Heart left ventricle (tissue), 16 donors: ENCODE measurements at regions of chr17 and their contacts with region 1.

Region 1: DNA sequence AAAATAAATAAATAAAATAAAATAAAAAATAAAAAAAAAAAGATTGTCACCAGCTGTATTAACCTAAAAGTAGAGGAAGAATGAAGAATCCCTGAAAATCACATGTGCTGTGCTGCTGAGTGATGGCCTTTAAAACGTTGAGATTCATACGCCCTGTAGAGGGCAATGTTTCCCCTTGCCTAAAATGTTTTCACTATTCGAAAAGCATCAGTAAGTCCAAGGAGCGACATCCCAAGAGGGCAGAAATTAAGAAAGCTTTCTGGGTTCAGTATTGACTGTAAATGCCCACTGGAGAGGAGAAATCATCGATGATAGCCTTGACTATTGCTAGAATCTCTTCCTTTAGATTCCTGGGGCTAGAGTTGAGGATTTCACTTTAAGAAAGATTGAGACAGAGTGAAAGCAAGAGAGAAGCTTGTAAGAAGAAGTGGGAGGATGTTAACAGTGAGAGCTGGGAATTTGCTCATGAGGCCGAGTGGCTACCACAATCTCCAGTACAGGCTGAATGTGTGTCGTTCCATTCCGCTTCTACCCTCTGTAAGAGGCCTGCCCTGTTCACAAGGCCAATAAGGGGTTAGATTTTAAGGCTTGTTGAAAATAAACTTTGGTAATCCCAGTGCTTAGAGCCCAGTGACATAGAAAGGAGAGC is 170.8 kb upstream of the FAM20A start:
- DNase-seq: no peak
- ATAC-seq: peak; percentile 53 to 89 (median 81)
- H3K4me3 ChIP-seq: peak overlapping the region in 6 of 12 donors; percentile 23 to 40 (median 37)
- H3K27ac ChIP-seq: peak overlapping the region in 11 of 12 donors; percentile 4 to 79 (median 46)
- H3K4me1 ChIP-seq: peaks cover 0 to 29% (median 4%) of the 10 kb centered on the region in 12 donors
- H3K27me3 ChIP-seq: no peaks in the 10 kb centered on the region
- CTCF ChIP-seq: peak; percentile 41 to 72 (median 63)
- POLR2A ChIP-seq: no peak

Region 2: GRCh38 chr17:68909066-68909465 is 137.1 kb after region 1 on chr17:
- intact Hi-C with region 1: loop called in 5 of 10 experiments (anchors 5 to 10 kb)
- DNase-seq: peak in 4 of 5 donors; percentile 40 to 51 (median 45)
- ATAC-seq: peak; percentile 35 to 89 (median 83)
- H3K4me3 ChIP-seq: no peak overlapping the region
- H3K27ac ChIP-seq: peak overlapping the region in 10 of 12 donors; percentile 13 to 86 (median 60)
- H3K4me1 ChIP-seq: peaks cover 0 to 32% (median 14%) of the 10 kb centered on the region in 12 donors
- H3K27me3 ChIP-seq: no peaks in the 10 kb centered on the region
- CTCF ChIP-seq: no peak
- POLR2A ChIP-seq: no peak

Region 3: GRCh38 chr17:68972119-68972704 is 200.2 kb after region 1 on chr17:
- intact Hi-C with region 1: loop called in 9 of 10 experiments (anchors 2 to 10 kb)
- DNase-seq: no peak
- ATAC-seq: peak in 1 of 4 donors; percentile 60
- H3K4me3 ChIP-seq: no peak overlapping the region
- H3K27ac ChIP-seq: peak overlapping the region in 2 of 12 donors; percentile 6 to 53
- H3K4me1 ChIP-seq: peaks cover 0 to 5% (median 0%) of the 10 kb centered on the region in 12 donors
- H3K27me3 ChIP-seq: no peaks in the 10 kb centered on the region
- CTCF ChIP-seq: peak; percentile 39 to 72 (median 56)
- POLR2A ChIP-seq: no peak

Region 4: GRCh38 chr17:69047368-69048263 is 275.6 kb after region 1 on chr17:
- intact Hi-C with region 1: loop called in 2 of 10 experiments (anchors 10 kb)
- DNase-seq: peak; percentile 48 to 72 (median 63)
- ATAC-seq: peak; percentile 78 to 95 (median 94)
- H3K4me3 ChIP-seq: no peak overlapping the region
- H3K27ac ChIP-seq: peak overlapping the region; percentile 53 to 78 (median 64)
- H3K4me1 ChIP-seq: peaks cover 0 to 32% (median 11%) of the 10 kb centered on the region in 12 donors
- H3K27me3 ChIP-seq: no peaks in the 10 kb centered on the region
- CTCF ChIP-seq: no peak
- POLR2A ChIP-seq: no peak

Region 5: DNA sequence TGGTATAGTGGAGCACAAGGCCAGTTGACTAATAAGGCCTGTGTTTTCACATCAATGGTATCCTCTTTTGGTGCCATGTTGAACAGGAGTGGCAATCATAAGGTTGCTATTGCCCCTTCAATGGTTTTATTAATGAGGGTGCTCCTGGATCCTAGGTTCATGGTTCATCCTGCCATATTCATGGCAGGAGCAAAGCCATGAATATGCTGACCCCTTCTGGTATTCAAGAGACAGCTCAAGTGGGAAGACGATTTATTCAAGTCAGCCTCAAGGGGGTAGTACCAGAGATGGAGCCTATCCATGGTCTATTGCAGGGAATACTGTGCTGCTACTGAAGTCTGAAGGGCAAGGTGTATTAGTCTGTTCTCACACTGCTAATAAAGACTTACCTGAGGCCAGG is 286.2 kb after region 1 on chr17:
- intact Hi-C with region 1: loop called in 1 of 10 experiments (anchors 10 kb)
- DNase-seq: no peak
- ATAC-seq: no peak
- H3K4me3 ChIP-seq: no peak overlapping the region
- H3K27ac ChIP-seq: peak overlapping the region in 1 of 12 donors; percentile 82
- H3K4me1 ChIP-seq: peaks cover 0 to 25% (median 0%) of the 10 kb centered on the region in 12 donors
- H3K27me3 ChIP-seq: no peaks in the 10 kb centered on the region
- CTCF ChIP-seq: no peak
- POLR2A ChIP-seq: no peak

Region 6: DNA sequence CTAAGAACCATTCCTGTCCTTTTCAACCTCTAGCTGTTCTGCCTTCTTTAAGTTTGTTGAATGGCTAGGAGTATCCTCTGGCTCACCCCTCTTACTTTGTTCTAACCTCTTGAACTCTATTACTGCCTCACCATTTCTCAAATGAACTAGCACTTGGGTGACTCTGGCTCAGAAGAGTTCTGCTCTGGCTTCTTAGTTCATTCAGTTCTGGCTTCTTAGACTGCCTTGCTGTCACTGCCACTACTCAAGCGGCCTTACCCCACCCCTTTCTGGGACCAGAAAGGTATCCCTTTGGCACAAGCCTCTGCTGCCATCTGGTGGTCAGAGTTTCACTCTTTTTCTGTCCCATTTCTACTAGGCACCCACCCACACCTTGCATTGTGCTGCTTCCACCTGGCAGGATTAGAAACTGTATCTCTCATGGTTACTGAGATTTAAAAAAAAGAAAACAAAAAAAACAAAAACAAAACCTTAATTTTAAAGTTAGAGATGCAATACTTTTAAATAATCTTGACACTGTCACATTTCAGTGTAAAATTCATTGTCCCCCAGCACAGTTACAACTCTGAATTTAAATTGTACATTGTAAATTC is 463.4 kb after region 1 on chr17:
- intact Hi-C with region 1: loop called in 9 of 10 experiments (anchors 1 to 5 kb)
- DNase-seq: peak; percentile 68 to 82 (median 80)
- ATAC-seq: peak; percentile 79 to 95 (median 93)
- H3K4me3 ChIP-seq: no peak overlapping the region
- H3K27ac ChIP-seq: peak overlapping the region in 1 of 12 donors; percentile 9
- H3K4me1 ChIP-seq: peaks cover 0 to 7% (median 0%) of the 10 kb centered on the region in 12 donors
- H3K27me3 ChIP-seq: no peaks in the 10 kb centered on the region
- CTCF ChIP-seq: peak; percentile 63 to 85 (median 76)
- POLR2A ChIP-seq: no peak

Region 7: DNA sequence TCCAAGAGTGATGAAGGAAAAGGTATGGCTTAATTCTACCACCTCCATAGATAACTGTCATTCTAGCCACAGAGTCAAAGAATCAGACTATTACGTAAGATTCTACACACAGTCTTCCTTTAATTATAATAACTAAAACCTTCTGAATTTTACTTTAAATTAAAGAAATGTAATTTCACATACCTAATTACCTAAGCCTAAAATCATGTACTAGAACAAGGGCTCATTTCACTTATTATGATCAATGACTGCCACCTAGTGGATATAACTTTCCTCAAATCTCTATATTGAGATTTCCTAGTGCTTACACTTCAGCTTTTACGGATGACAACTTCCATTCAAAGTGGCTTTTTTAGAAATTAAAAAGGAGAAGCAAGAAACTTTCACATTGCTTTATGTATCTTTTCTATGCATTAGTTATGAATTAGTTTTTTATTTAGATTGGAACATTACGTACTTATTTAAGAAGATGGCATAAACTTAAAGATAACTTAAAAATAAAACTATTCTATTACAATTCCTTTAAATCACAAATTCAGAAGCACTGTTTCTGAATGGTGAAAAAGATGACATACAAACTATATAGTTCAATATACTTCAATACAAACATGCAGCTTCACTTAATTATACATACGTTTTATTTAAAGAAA is 474.9 kb after region 1 on chr17:
- intact Hi-C with region 1: loop called in 3 of 10 experiments (anchors 5 kb)
- DNase-seq: no peak
- ATAC-seq: peak in 2 of 4 donors; percentile 56 to 59
- H3K4me3 ChIP-seq: no peak overlapping the region
- H3K27ac ChIP-seq: no peak overlapping the region
- H3K4me1 ChIP-seq: no peaks in the 10 kb centered on the region
- H3K27me3 ChIP-seq: no peaks in the 10 kb centered on the region
- CTCF ChIP-seq: peak; percentile 43 to 77 (median 62)
- POLR2A ChIP-seq: no peak